ENCODE measurements at regions of chr15 and their contacts with region 1.

Region 1: DNA sequence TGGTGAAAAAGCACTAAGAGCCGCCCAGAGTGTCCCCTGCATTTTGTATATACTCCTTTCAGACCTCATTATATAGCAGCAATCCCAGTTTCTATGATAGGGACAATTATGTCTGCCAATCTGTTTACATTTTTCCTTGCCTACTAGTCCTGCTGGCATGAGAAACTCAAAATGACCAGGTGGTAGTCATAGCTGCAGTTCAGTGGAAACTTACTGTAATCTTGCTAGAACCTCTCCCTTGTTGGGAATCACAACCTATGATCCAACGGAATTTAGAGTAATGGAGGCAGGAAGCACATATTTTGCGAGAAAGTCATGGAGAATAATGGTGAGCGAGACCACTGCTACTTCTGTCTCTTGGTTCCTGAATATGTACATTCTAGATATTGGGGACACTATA is 28.6 kb upstream of the MINAR1 start:
- DNase-seq: no peak
- H3K4me3 ChIP-seq: no peak overlapping the region
- H3K27ac ChIP-seq: no peak overlapping the region
- H3K4me1 ChIP-seq: no peaks in the 10 kb centered on the region
- H3K27me3 ChIP-seq: no peaks in the 10 kb centered on the region
- CTCF ChIP-seq: no peak
- POLR2A ChIP-seq: no peak

Region 2: GRCh38 chr15:79154483-79155135 is 248.9 kb before region 1 on chr15:
- intact Hi-C with region 1: loop called (anchors 5 kb)
- DNase-seq: no peak
- H3K4me3 ChIP-seq: no peak overlapping the region
- H3K27ac ChIP-seq: no peak overlapping the region
- H3K4me1 ChIP-seq: no peaks in the 10 kb centered on the region
- H3K27me3 ChIP-seq: no peaks in the 10 kb centered on the region
- CTCF ChIP-seq: no peak
- POLR2A ChIP-seq: no peak

Region 3: GRCh38 chr15:79283252-79284048 is 120.1 kb before region 1 on chr15:
- intact Hi-C with region 1: no loop called
- DNase-seq: no peak
- H3K4me3 ChIP-seq: no peak overlapping the region
- H3K27ac ChIP-seq: no peak overlapping the region
- H3K4me1 ChIP-seq: no peaks in the 10 kb centered on the region
- H3K27me3 ChIP-seq: peaks cover 0 to 40% of the 10 kb centered on the region in 2 donors
- CTCF ChIP-seq: no peak
- POLR2A ChIP-seq: no peak

Region 4: GRCh38 chr15:80804965-80805495 is 1401.5 kb after region 1 on chr15:
- intact Hi-C with region 1: loop called (anchors 5 kb)
- DNase-seq: no peak
- H3K4me3 ChIP-seq: no peak overlapping the region
- H3K27ac ChIP-seq: no peak overlapping the region
- H3K4me1 ChIP-seq: no peaks in the 10 kb centered on the region
- H3K27me3 ChIP-seq: no peaks in the 10 kb centered on the region
- CTCF ChIP-seq: no peak
- POLR2A ChIP-seq: no peak

Measured in breast epithelium (tissue), 4 donors.